PC-9 (cell line): ENCODE measurements at regions of chr3 and their contacts with region 1.

Region 1: GRCh38 chr3:52636673-52637072 is 49.0 kb downstream of the PBRM1 start:
- DNase-seq: peak; percentile 35 to 81
- H3K4me3 ChIP-seq: no peak overlapping the region
- H3K27ac ChIP-seq: peak overlapping the region; percentile 53; the same call in 1 of the 2 replicates
- H3K4me1 ChIP-seq: peaks cover 10% of the 10 kb centered on the region; the same call in 1 of the 2 replicates
- H3K27me3 ChIP-seq: no peaks in the 10 kb centered on the region
- CTCF ChIP-seq: no peak

Region 2: DNA sequence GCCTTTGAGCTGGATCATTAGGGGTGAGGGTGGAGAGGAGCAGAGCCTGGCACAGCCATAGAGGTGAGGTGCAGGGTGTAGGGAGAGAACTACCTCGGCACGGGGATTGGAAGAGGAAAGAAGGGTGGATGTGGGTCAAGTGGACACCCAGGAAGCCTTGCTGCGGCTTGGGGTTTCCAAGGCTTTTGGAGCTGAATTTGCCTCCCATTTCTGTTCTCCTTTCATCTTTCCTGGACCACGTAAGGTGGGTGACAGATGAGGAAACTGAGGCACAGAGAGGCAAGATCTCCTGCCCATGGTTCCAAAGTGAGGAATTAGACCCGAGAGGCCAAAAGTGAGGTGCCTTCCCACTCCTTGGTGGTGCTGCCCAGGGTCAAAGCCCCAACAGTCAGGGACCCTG is 444.6 kb after region 1 on chr3:
- CTCF ChIA-PET with region 1: no interaction called
- POLR2A ChIA-PET with region 1: interaction called, 12 read pairs
- intact Hi-C with region 1: no loop called
- DNase-seq: no peak
- H3K4me3 ChIP-seq: no peak overlapping the region
- H3K27ac ChIP-seq: no peak overlapping the region
- H3K4me1 ChIP-seq: peaks cover 24% of the 10 kb centered on the region
- H3K27me3 ChIP-seq: no peaks in the 10 kb centered on the region
- CTCF ChIP-seq: no peak